Endothelial cell of umbilical vein (primary cell): ENCODE measurements at regions of chr14 and their contacts with region 1.

Region 1: GRCh38 chr14:98328496-98328895 is 943.5 kb downstream of the BCL11B start:
- DNase-seq: no peak
- H3K4me3 ChIP-seq: no peak overlapping the region
- H3K27ac ChIP-seq: no peak overlapping the region
- H3K4me1 ChIP-seq: no peaks in the 10 kb centered on the region
- H3K27me3 ChIP-seq: no peaks in the 10 kb centered on the region
- CTCF ChIP-seq: no peak
- POLR2A ChIP-seq: no peak

Region 2: GRCh38 chr14:98347686-98348085 is 19.2 kb after region 1 on chr14:
- CTCF ChIA-PET with region 1: no interaction called
- POLR2A ChIA-PET with region 1: no interaction called
- dilution Hi-C with region 1: no loop called
- intact Hi-C with region 1: loop called (anchors 2 kb)
- DNase-seq: no peak
- H3K4me3 ChIP-seq: no peak overlapping the region
- H3K27ac ChIP-seq: no peak overlapping the region
- H3K4me1 ChIP-seq: no peaks in the 10 kb centered on the region
- H3K27me3 ChIP-seq: no peaks in the 10 kb centered on the region
- CTCF ChIP-seq: no peak
- POLR2A ChIP-seq: no peak

Region 3: DNA sequence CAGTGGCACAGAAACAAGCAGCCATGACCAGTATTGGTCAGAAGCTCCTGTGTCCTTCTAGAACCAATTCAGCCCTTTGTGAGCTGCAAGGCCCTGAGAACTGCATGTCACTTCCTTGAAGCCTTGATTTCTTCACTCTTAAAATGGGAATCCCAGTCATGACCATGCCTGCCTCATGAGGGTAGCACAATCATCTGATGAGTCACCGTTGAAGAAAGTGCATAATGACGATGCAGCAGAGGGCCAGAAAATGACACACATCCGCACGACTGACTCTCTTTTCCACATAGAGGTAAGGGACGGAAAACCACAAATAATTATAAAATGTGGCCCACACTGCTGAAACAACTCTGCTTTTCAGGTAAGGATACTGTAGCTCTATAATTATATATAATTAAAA is 166.1 kb after region 1 on chr14:
- CTCF ChIA-PET with region 1: no interaction called
- POLR2A ChIA-PET with region 1: no interaction called
- dilution Hi-C with region 1: no loop called
- intact Hi-C with region 1: no loop called
- DNase-seq: no peak
- H3K4me3 ChIP-seq: no peak overlapping the region
- H3K27ac ChIP-seq: no peak overlapping the region
- H3K4me1 ChIP-seq: no peaks in the 10 kb centered on the region
- H3K27me3 ChIP-seq: no peaks in the 10 kb centered on the region
- CTCF ChIP-seq: no peak
- POLR2A ChIP-seq: no peak